Tibial artery (tissue), 4 donors: ENCODE measurements at regions of chr6 and their contacts with region 1.

Region 1: GRCh38 chr6:27081931-27082330 is 165.6 kb upstream of the PRSS16 start:
- DNase-seq: no peak
- H3K4me3 ChIP-seq: no peak overlapping the region
- H3K27ac ChIP-seq: no peak overlapping the region
- H3K4me1 ChIP-seq: peaks cover 0 to 4% (median 0%) of the 10 kb centered on the region in 4 donors
- H3K27me3 ChIP-seq: peaks cover 0 to 19% of the 10 kb centered on the region in 2 donors
- CTCF ChIP-seq: no peak

Region 2: GRCh38 chr6:26607434-26608230 is 474.3 kb before region 1 on chr6:
- intact Hi-C with region 1: loop called (anchors 10 kb)
- DNase-seq: no peak
- H3K4me3 ChIP-seq: peak overlapping the region in 1 of 2 donors; percentile 25
- H3K27ac ChIP-seq: no peak overlapping the region
- H3K4me1 ChIP-seq: peaks cover 0 to 5% (median 0%) of the 10 kb centered on the region in 4 donors
- H3K27me3 ChIP-seq: peaks cover 0 to 9% of the 10 kb centered on the region in 2 donors
- CTCF ChIP-seq: peak; percentile 34 to 48